ENCODE measurements at regions of chr7 and their contacts with region 1.

Region 1: GRCh38 chr7:56063882-56064625 is at the start of gene SUMF2:
- DNase-seq: peak; percentile 78
- ATAC-seq: peak; percentile 95
- H3K4me3 ChIP-seq: peak within 1 kb of the TSS; percentile 72
- H3K27ac ChIP-seq: peak within 1 kb of the TSS; percentile 71
- H3K4me1 ChIP-seq: peaks cover 6% of the 10 kb centered on the region; the same call in 1 of the 2 replicates
- H3K27me3 ChIP-seq: no peaks in the 10 kb centered on the region
- CTCF ChIP-seq: peak in 2 of 3 experiments; percentile 12 to 32; a peak in 2 of 6 replicates
- EP300 ChIP-seq: no peak
- POLR2A ChIP-seq: peak; percentile 99
- RAD21 ChIP-seq: no peak
- polyA plus RNA-seq, gene SUMF2: 39.9 to 62.4 TPM

Region 2: DNA sequence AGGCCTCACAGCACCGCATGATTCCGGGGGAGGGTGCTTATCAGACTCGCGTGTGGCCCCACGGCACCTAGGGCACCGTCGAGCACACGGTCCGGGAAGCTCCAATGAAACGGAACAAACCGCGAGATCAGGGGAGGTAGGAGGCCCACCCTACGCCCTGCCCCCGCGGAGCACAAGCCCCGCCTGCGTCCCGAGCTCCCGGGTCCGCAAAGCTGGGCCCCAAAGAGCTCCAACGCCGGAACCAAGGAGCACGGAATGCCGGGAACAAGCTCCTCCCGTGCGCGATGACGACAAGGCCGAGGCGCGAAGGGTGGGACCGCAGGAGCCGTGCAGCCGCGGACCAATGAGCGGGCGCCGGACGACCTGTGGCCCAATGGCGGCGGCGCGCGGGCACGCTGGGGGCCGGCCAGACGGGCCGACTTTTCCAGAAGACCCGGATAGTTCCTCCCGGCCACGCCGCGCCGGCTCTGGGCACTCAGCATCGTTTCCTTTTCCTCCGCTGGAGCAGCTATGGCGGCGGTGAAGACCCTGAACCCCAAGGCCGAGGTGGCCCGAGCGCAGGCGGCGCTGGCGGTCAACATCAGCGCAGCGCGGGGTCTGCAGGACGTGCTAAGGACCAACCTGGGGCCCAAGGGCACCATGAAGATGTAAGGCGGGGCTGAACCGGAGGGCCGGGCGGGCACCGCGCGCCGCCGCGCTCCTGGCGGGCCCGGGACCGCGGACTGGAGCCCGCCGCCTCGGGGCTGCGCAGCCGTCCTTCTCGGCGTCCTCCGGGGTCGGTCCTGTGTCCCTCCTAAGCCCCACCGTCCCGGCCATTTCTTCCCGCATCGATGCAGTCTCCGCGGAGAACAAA is 12.5 kb before region 1 on chr7 and contains the starts of genes CCT6A and PSPH:
- CTCF ChIA-PET with region 1: interaction called, 7 read pairs
- POLR2A ChIA-PET with region 1: interaction called, 29 read pairs
- RAD21 ChIA-PET with region 1: interaction called, 23 read pairs
- SMC1A ChIA-PET with region 1: interaction called, 13 read pairs
- in situ Hi-C with region 1: no loop called
- intact Hi-C with region 1: loop called (anchors 1 kb)
- DNase-seq: peak; percentile 87
- ATAC-seq: peak; percentile 94
- H3K4me3 ChIP-seq: peak within 1 kb of the TSS; percentile 86
- H3K27ac ChIP-seq: peak within 1 kb of the TSS; percentile 83
- H3K4me1 ChIP-seq: peaks cover 14% of the 10 kb centered on the region
- H3K27me3 ChIP-seq: no peaks in the 10 kb centered on the region
- CTCF ChIP-seq: no peak
- EP300 ChIP-seq: no peak
- POLR2A ChIP-seq: peak; percentile 91
- RAD21 ChIP-seq: no peak
- polyA plus RNA-seq, gene CCT6A: 191 to 319 TPM
- polyA plus RNA-seq, gene PSPH: 5.2 to 10.5 TPM

Region 3: DNA sequence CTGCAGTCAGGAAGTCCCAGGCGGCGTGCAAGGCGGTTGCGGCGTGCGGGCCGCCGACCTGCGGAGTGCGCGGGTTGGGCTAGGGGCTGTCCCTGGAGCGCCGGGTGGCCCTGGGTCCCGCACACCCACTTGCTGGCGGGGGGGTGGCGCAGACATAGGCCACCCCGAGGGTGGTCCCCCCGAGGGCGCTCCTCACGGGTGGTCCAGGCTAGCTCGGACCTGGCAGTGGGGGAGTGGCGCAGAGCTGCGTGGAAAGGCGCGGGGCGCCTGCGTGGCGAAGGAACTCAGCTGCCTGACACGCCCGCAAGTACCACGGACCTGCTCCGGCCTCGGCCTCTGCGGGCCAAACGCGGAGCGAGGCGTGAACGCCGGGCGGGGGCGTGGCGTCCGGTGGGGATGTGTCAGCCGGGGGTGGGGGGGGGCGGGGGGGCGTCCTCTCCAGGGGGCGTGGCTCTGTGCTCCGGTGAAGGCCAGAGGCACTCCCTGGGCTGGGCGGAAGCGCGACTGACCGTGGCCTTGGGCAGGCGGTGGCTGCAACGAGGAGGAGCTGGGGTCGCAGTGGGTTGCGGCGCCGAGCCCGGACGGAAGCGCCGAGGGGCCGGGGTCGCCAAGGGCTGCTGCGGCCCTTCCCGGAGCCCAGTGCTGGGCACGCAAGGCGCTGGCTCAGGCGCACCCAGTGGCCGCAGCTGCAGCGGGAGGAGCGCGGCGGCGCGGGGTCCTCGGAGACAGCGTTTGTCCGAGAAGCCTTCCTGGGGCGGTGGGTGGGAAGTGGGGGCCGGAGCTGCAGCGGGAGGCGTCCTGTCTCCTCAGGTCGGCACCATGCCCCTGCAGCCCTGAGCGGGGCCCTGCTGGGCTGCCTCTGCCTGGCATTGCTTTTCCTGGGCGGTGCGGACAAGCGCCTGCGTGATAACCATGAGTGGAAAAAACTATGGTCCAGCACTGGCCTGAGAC is 111.0 kb after region 1 on chr7:
- CTCF ChIA-PET with region 1: no interaction called
- POLR2A ChIA-PET with region 1: no interaction called
- RAD21 ChIA-PET with region 1: no interaction called
- SMC1A ChIA-PET with region 1: no interaction called
- in situ Hi-C with region 1: no loop called
- intact Hi-C with region 1: no loop called
- DNase-seq: no peak
- ATAC-seq: no peak
- H3K4me3 ChIP-seq: no peak overlapping the region
- H3K27ac ChIP-seq: no peak overlapping the region
- H3K4me1 ChIP-seq: no peaks in the 10 kb centered on the region
- H3K27me3 ChIP-seq: no peaks in the 10 kb centered on the region
- CTCF ChIP-seq: no peak
- EP300 ChIP-seq: no peak
- POLR2A ChIP-seq: no peak
- RAD21 ChIP-seq: no peak

Region 4: DNA sequence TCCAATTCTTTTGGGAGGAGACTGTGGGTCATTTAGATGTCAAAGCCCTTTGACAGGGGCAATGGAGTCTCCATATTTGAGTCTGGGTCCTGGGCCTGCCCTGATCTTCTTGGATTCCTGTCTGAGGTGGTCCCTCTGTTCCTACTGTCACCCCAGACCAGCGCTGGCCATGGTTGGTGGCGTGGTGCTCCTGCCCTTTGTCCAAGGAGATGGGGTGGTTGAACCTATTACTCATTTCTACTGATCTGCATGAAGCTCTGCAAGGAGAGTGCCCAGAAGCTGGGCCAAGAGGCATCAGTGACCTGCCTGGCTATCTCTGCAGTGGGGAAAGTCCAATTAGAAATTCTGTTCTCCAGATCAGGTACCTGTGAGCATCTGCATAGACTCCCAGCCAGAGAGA is 407.8 kb after region 1 on chr7:
- CTCF ChIA-PET with region 1: no interaction called
- POLR2A ChIA-PET with region 1: no interaction called
- RAD21 ChIA-PET with region 1: no interaction called
- SMC1A ChIA-PET with region 1: no interaction called
- in situ Hi-C with region 1: no loop called
- intact Hi-C with region 1: no loop called
- DNase-seq: no peak
- ATAC-seq: no peak
- H3K4me3 ChIP-seq: no peak overlapping the region
- H3K27ac ChIP-seq: no peak overlapping the region
- H3K4me1 ChIP-seq: no peaks in the 10 kb centered on the region
- H3K27me3 ChIP-seq: no peaks in the 10 kb centered on the region
- CTCF ChIP-seq: no peak
- EP300 ChIP-seq: no peak
- POLR2A ChIP-seq: no peak
- RAD21 ChIP-seq: no peak

Measured in GM12878 (cell line).